ENCODE measurements at regions of chr2 and their contacts with region 1.

Region 1: DNA sequence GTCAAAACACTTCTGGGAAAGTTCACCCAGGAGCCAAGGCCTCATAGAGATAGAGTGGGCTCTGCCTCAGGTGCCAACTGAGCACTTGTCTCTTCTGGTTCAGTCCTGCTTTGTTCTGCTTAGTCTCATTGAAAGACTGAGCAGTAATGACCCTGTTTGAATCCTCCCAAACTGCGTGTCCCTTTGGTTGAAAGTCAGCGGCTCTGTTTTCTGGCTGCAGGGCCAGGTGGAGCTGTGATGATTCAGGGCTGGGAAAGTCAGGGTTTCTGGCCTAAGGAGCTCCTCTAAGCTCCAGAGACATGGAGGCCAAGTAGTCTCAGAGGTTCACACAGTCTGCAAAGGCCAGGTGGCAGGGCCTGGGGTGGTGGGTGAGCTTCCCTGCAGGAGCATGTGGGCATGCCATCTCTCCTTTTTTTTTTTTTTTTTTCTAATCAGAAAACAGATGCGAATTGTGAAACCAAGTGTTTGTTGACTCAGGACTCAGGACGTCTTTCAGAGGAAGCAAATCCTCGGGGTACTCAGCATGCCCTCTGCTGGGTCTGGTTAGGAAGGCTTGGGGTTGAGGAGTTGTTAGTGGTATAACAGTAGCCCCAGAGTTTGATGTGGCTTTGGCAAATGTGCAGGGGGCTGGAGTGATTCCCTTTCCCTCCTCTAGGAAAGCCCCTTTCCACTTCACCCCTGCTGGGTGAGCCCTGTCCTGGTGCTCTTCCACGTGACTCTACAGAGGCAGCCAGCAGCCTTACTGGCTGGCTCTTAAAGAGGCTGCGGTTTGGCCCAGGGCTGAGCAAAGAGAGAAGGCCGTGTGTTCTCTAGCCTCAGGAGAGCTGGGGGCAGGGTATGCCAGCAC is 38.3 kb downstream of the TMEM17 start:
- DNase-seq: no peak
- H3K4me3 Mint-ChIP-seq: no peak overlapping the region
- H3K27ac Mint-ChIP-seq: no peak overlapping the region
- H3K4me1 Mint-ChIP-seq: no peaks in the 10 kb centered on the region
- H3K27me3 Mint-ChIP-seq: no peaks in the 10 kb centered on the region

Region 2: GRCh38 chr2:62456721-62457539 is 10.8 kb before region 1 on chr2:
- CTCF ChIA-PET with region 1: interaction called, 16 read pairs
- POLR2A ChIA-PET with region 1: no interaction called
- DNase-seq: peak; percentile 59
- H3K4me3 Mint-ChIP-seq: peak overlapping the region; percentile 13
- H3K27ac Mint-ChIP-seq: no peak overlapping the region
- H3K4me1 Mint-ChIP-seq: no peaks in the 10 kb centered on the region
- H3K27me3 Mint-ChIP-seq: peaks cover 6% of the 10 kb centered on the region

Region 3: DNA sequence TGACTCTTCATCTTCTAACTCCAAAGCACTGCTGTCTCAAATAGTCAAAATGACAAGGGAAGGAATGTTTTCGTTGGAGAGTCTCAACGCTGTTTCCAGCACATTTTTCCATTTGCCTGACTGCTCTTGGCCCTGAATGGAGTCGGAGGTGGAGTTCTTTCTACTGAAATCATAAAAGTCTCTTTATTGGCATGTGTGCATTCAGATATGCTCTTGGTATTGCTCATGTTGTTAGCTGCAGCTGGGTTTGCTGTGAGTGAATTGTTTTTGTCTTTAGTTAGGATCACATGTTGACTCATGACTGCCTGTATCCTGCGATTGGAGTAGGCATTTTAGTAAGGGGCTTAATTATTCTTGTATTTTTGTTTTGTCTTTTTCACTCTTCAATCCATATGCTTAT is 21.5 kb after region 1 on chr2:
- CTCF ChIA-PET with region 1: no interaction called
- POLR2A ChIA-PET with region 1: no interaction called
- DNase-seq: no peak
- H3K4me3 Mint-ChIP-seq: no peak overlapping the region
- H3K27ac Mint-ChIP-seq: no peak overlapping the region
- H3K4me1 Mint-ChIP-seq: no peaks in the 10 kb centered on the region
- H3K27me3 Mint-ChIP-seq: no peaks in the 10 kb centered on the region